Heart right ventricle (tissue), 16 donors: ENCODE measurements at regions of chr14 and their contacts with region 1.

Region 1: DNA sequence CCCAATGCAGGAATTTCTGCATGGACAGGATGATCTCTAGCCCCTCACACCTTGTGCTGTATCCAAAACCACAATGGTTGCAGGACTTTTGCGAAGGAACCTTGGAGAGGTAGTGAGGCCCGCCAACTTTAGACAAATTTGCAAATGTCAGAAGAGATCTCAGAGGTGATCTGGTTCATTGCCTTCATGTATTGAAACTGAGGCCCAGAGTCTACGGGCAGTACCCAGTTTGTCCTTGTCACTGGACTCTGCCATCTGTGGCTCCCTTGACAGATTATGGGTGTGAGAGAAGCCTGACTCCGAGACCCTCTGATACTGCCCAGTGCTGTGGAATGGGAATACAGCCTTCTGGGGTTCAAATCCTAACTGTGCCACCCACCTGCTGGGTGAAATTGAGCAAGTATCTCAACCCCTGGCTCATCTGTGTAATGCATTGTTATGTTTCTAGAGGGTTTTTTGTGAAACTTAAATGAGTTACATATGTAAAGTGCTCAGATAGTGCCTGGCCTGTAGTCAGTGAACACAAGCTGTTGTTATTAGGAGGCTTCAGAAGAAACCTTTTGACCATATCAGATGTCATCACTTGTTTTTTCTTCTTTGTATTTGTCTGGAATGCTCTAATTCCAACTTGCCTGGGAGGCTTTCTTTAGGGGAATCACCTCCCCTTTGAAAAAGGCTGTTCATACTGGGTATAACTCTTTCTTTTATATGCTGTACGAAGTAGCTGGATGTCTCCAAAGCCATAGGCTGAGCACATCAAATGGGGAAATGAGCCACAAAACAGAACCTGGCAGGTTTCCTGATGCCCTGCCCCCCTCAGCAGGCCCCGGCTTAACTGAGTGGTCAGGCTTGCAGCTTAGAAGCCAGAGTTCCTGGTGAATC is 71.4 kb upstream of the SRSF5 start:
- DNase-seq: no peak
- ATAC-seq: peak in 5 of 8 donors; percentile 15 to 35 (median 22)
- H3K4me3 ChIP-seq: no peak overlapping the region
- H3K27ac ChIP-seq: peak overlapping the region in 9 of 10 donors; percentile 65 to 92 (median 83)
- H3K4me1 ChIP-seq: peaks cover 32 to 98% (median 84%) of the 10 kb centered on the region in 9 donors
- H3K27me3 ChIP-seq: no peaks in the 10 kb centered on the region
- CTCF ChIP-seq: no peak

Region 2: DNA sequence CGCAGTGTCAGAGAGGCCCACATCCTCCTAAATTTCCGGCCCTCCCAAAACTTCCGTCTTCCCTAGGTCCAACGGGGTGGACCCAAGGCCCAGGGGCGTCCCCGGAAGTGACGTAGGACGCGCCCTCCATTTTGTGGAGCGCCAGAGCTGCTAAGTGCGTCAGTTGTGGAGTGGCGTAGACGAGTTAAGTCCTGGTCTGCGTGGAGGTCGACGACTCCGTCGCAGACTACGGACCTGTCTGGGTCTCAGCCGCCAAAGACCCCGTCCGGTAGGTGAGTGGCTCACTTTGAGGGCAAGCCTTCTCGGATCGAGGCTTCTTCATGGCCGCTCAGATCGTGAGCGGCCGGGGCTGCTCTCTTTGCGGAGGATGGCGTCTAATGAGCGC is 71.4 kb after region 1 on chr14 and contains the start of gene SRSF5:
- intact Hi-C with region 1: loop called in 1 of 10 experiments (anchors 2 kb)
- DNase-seq: peak; percentile 95 to 97
- ATAC-seq: peak; percentile 96 to 99 (median 98)
- H3K4me3 ChIP-seq: peak within 1 kb of the TSS; percentile 82 to 97 (median 92)
- H3K27ac ChIP-seq: peak within 1 kb of the TSS; percentile 98 to 100 (median 100)
- H3K4me1 ChIP-seq: peaks cover 0 to 49% (median 46%) of the 10 kb centered on the region in 9 donors
- H3K27me3 ChIP-seq: no peaks in the 10 kb centered on the region
- CTCF ChIP-seq: no peak
- total RNA-seq, gene SRSF5: 149 to 221 (median 173) TPM

Region 3: GRCh38 chr14:69796797-69797500 is 101.4 kb after region 1 on chr14 and contains the start of gene SLC10A1:
- intact Hi-C with region 1: no loop called
- DNase-seq: no peak
- ATAC-seq: peak in 4 of 8 donors; percentile 21 to 50 (median 42)
- H3K4me3 ChIP-seq: no peak within 1 kb of the TSS
- H3K27ac ChIP-seq: no peak within 1 kb of the TSS
- H3K4me1 ChIP-seq: peaks cover 0 to 5% (median 0%) of the 10 kb centered on the region in 9 donors
- H3K27me3 ChIP-seq: peaks cover 0 to 5% (median 0%) of the 10 kb centered on the region in 7 donors
- CTCF ChIP-seq: no peak
- total RNA-seq, gene SLC10A1: not detected